ENCODE measurements at regions of chr12 and their contacts with region 1.

Region 1: DNA sequence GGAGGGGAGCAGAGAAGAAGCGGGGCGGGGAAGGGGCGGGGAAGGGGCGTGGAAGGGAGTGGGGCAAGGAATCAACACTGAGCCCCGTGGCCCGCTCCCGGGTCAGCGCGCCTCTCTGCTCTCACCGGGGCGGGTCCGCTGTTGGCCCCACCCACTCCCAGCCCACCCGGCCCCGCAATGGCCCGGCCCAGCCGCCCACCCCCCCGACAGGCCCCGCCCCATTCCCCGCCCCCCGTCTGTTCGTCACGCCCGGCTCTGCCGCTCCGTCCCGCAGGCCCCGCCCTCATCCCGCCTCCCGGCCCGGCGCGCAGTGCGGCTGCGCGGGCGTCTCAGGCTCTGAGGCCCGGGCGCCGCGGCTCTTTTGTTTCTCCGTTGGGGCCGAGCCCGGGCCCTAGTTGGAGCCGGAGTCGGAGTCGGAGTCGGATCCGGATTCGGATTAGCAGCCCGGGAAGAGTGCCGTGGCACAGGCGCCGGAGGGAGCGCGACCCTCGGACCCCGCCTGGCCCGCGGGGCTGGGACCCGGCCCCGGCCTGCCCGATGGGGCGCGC is at the start of gene ULK1:
- DNase-seq: peak; percentile 96
- ATAC-seq: peak; percentile 56
- H3K4me3 ChIP-seq: peak within 1 kb of the TSS; percentile 74
- H3K27ac ChIP-seq: peak within 1 kb of the TSS; percentile 88; the same call in 1 of the 2 replicates
- H3K4me1 ChIP-seq: peaks cover 19% of the 10 kb centered on the region
- H3K27me3 ChIP-seq: no peaks in the 10 kb centered on the region
- CTCF ChIP-seq: no peak
- total RNA-seq, gene ULK1: 15.7 and 29.5 TPM in 2 replicates

Region 2: GRCh38 chr12:131836193-131836592 is 58.2 kb before region 1 on chr12:
- CTCF ChIA-PET with region 1: no interaction called
- POLR2A ChIA-PET with region 1: no interaction called
- intact Hi-C with region 1: loop called (anchors 2 kb)
- DNase-seq: peak; percentile 33
- ATAC-seq: no peak
- H3K4me3 ChIP-seq: no peak overlapping the region
- H3K27ac ChIP-seq: no peak overlapping the region
- H3K4me1 ChIP-seq: peaks cover 16% of the 10 kb centered on the region; the same call in 1 of the 2 replicates
- H3K27me3 ChIP-seq: no peaks in the 10 kb centered on the region
- CTCF ChIP-seq: peak; percentile 89

Region 3: GRCh38 chr12:131860562-131861291 is 33.7 kb before region 1 on chr12:
- CTCF ChIA-PET with region 1: no interaction called
- POLR2A ChIA-PET with region 1: no interaction called
- intact Hi-C with region 1: loop called (anchors 1 kb)
- DNase-seq: peak; percentile 95
- ATAC-seq: peak; percentile 49
- H3K4me3 ChIP-seq: peak overlapping the region; percentile 55
- H3K27ac ChIP-seq: peak overlapping the region; percentile 84
- H3K4me1 ChIP-seq: peaks cover 53% of the 10 kb centered on the region
- H3K27me3 ChIP-seq: no peaks in the 10 kb centered on the region
- CTCF ChIP-seq: no peak

Region 4: DNA sequence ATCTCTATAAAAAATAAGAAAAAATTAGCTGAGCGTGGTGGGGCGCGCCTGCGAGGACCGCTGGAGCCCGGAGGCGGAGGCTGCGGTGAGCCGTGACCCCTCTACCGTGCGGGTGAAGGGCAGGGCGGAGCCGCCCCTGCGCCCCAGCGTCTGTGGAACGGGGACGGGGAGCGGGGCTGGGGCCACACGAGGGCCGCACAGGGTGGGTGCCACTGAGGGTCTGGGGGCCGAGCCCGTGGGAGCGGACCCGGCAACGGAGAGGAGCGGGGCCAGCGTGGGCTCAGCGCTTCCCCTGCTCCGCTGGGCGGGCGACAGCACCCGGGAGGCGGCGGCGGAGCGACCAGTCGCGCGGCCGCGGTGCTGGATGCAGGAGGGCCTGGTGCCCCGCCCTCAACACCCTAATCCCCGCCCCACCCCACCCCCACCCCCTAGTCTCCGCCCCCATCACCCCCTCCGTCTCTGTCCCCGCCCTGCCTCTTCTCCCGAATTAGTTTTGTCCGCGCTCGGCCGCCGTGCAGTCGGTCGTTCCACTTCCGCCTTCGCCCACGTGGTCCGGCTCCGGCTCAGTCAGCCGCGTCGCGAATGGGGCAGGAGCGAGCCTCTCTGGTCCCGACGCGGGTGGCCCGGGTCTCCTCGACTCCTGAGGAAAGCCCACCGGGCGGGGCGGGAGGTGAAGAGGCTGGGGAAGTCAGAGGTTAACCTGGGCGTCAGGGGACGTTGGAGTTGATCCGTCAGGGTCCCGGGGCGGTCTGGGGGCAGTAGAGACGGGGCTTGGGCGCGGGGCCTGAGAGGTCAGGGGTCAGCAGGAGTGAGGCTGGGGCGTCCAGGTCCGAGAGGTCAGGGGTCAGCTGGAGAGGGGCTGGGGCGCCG is 34.6 kb after region 1 on chr12 and contains the start of gene PUS1:
- CTCF ChIA-PET with region 1: no interaction called
- POLR2A ChIA-PET with region 1: no interaction called
- intact Hi-C with region 1: loop called (anchors 2 kb)
- DNase-seq: peak; percentile 96
- ATAC-seq: peak; percentile 83
- H3K4me3 ChIP-seq: peak within 1 kb of the TSS; percentile 90
- H3K27ac ChIP-seq: peak within 1 kb of the TSS; percentile 81
- H3K4me1 ChIP-seq: peaks cover 14% of the 10 kb centered on the region
- H3K27me3 ChIP-seq: no peaks in the 10 kb centered on the region
- CTCF ChIP-seq: no peak
- total RNA-seq, gene PUS1: 74.0 TPM in 2 replicates

Measured in PC-3 (cell line).